ENCODE measurements at regions of chr19 and their contacts with region 1.

Region 1: GRCh38 chr19:13588957-13589833 is 82.9 kb upstream of the CACNA1A start:
- DNase-seq: peak; percentile 89
- ATAC-seq: peak; percentile 62

Region 2: DNA sequence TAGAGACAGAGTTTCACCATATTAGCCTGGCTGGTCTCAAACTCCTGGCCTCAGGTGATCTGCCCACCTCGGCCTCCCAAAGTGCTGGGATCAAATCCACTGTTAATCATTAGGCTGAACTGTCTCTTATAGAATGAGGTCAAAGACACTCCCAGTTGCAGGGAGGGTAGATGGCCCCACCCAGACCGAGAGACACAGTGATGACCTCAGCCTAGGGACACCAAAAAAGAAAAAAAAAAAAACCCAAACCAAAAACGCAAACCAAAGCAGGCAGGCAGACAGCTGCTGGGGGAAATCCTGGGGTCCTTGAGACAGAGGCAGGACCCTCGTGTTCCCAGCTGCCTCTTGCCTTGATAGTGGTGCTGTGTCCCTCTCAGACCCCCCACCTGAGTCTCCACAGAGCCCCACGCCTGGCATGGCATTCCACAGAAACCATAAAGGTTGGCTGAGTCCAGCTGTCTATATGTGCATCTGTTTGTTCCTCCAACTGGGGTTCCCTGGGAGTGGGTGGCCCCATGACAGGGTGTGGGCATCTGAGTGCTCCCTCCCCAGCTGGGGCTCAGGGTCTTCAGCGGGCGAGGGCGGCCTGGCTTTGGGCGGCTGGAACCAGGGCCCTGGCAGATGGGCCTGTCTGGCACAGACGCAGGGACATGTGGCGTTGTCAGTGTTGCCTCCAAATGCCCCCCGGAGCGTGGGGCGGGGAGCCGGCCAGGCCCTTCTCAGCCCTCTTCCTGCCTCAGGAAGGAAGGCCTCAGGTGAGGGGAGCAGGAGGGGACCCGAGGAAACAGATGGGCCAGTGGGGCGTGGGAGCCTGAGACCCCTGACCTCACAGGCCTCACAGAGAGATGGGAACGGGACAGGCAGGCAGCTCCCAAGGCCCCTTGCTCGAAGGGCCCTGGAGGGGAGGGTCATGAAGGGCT is 614.6 kb before region 1 on chr19:
- intact Hi-C with region 1: loop called (anchors 10 kb)
- DNase-seq: peak; percentile 27
- ATAC-seq: no peak

Region 3: GRCh38 chr19:13022859-13023636 is 566.1 kb before region 1 on chr19:
- intact Hi-C with region 1: no loop called
- DNase-seq: peak; percentile 86
- ATAC-seq: peak; percentile 89

Region 4: GRCh38 chr19:13610039-13610691 is 21.0 kb after region 1 on chr19:
- intact Hi-C with region 1: no loop called
- DNase-seq: no peak
- ATAC-seq: no peak

Region 5: GRCh38 chr19:13633109-13633508 is 43.9 kb after region 1 on chr19:
- intact Hi-C with region 1: no loop called
- DNase-seq: no peak
- ATAC-seq: no peak

Region 6: DNA sequence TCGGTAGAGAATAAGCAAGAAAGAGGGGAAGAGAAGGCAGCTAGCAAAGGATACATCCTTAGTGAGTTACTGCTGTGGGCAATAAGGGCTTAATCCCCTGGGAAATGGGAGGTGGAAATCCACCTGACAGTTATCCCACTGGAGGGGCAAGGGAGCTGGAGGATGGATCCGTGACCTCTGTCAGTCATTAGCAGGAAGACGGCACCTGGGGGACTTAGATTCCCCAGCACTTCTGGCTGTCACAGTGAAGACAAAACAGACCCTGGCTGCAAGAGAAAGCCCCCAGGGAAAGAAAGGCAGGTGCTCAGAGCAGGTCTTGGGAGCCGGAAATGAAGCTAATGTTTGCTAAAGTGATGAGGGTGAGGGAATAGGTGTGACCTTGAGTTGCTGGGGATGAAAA is 104.7 kb after region 1 on chr19:
- intact Hi-C with region 1: no loop called
- DNase-seq: no peak
- ATAC-seq: no peak

Measured in Right ventricle myocardium inferior (tissue), 1 donor.